CD4-positive, alpha-beta T cell (primary cell): ENCODE measurements at regions of chrX and their contacts with region 1.

Region 1: GRCh38 chrX:48801280-48802088 is at the start of gene HDAC6:
- DNase-seq: peak; percentile 87 to 99 (median 93)
- ATAC-seq: peak; percentile 84
- H3K4me3 ChIP-seq: peak within 1 kb of the TSS; percentile 87
- H3K4me3 Mint-ChIP-seq: peak within 1 kb of the TSS; percentile 93
- H3K27ac ChIP-seq: peak within 1 kb of the TSS; percentile 89 to 97
- H3K27ac Mint-ChIP-seq: peak within 1 kb of the TSS; percentile 99
- H3K4me1 ChIP-seq: peaks cover 17% of the 10 kb centered on the region
- H3K4me1 Mint-ChIP-seq: peaks cover 18% of the 10 kb centered on the region
- H3K27me3 ChIP-seq: no peaks in the 10 kb centered on the region
- H3K27me3 Mint-ChIP-seq: no peaks in the 10 kb centered on the region
- CTCF ChIP-seq: no peak
- total RNA-seq, gene HDAC6: 95.2 to 95.7 TPM

Region 2: GRCh38 chrX:48574270-48575266 is 226.9 kb before region 1 on chrX and contains the start of gene RBM3:
- CTCF ChIA-PET with region 1: no interaction called
- POLR2A ChIA-PET with region 1: interaction called, 18 read pairs
- intact Hi-C with region 1: no loop called
- DNase-seq: peak; percentile 80 to 97 (median 90)
- ATAC-seq: peak; percentile 93
- H3K4me3 ChIP-seq: peak within 1 kb of the TSS; percentile 87
- H3K4me3 Mint-ChIP-seq: peak within 1 kb of the TSS; percentile 98
- H3K27ac ChIP-seq: peak within 1 kb of the TSS; percentile 99 to 100
- H3K27ac Mint-ChIP-seq: peak within 1 kb of the TSS; percentile 98
- H3K4me1 ChIP-seq: peaks cover 26% of the 10 kb centered on the region
- H3K4me1 Mint-ChIP-seq: peaks cover 27% of the 10 kb centered on the region
- H3K27me3 ChIP-seq: no peaks in the 10 kb centered on the region
- H3K27me3 Mint-ChIP-seq: no peaks in the 10 kb centered on the region
- CTCF ChIP-seq: peak; percentile 36
- total RNA-seq, gene RBM3: 351 to 377 TPM

Region 3: GRCh38 chrX:48676106-48676892 is 125.2 kb before region 1 on chrX:
- CTCF ChIA-PET with region 1: no interaction called
- POLR2A ChIA-PET with region 1: interaction called, 12 read pairs
- intact Hi-C with region 1: loop called (anchors 5 to 10 kb)
- DNase-seq: peak; percentile 74 to 94 (median 86)
- ATAC-seq: peak; percentile 96
- H3K4me3 ChIP-seq: peak overlapping the region; percentile 79
- H3K4me3 Mint-ChIP-seq: peak overlapping the region; percentile 95
- H3K27ac ChIP-seq: peak overlapping the region; percentile 64
- H3K27ac Mint-ChIP-seq: peak overlapping the region; percentile 96
- H3K4me1 ChIP-seq: peaks cover 28% of the 10 kb centered on the region
- H3K4me1 Mint-ChIP-seq: peaks cover 18% of the 10 kb centered on the region
- H3K27me3 ChIP-seq: no peaks in the 10 kb centered on the region
- H3K27me3 Mint-ChIP-seq: no peaks in the 10 kb centered on the region
- CTCF ChIP-seq: no peak

Region 4: GRCh38 chrX:48696301-48697181 is 104.9 kb before region 1 on chrX and contains the start of gene SUV39H1:
- CTCF ChIA-PET with region 1: no interaction called
- POLR2A ChIA-PET with region 1: interaction called, 16 read pairs
- intact Hi-C with region 1: loop called (anchors 1 to 5 kb)
- DNase-seq: peak; percentile 66 to 95 (median 80)
- ATAC-seq: peak; percentile 93
- H3K4me3 ChIP-seq: peak within 1 kb of the TSS; percentile 65
- H3K4me3 Mint-ChIP-seq: peak within 1 kb of the TSS; percentile 98
- H3K27ac ChIP-seq: peak within 1 kb of the TSS; percentile 72 to 75
- H3K27ac Mint-ChIP-seq: peak within 1 kb of the TSS; percentile 98
- H3K4me1 ChIP-seq: peaks cover 17% of the 10 kb centered on the region
- H3K4me1 Mint-ChIP-seq: peaks cover 24% of the 10 kb centered on the region
- H3K27me3 ChIP-seq: no peaks in the 10 kb centered on the region
- H3K27me3 Mint-ChIP-seq: no peaks in the 10 kb centered on the region
- CTCF ChIP-seq: no peak
- total RNA-seq, gene SUV39H1: 7.7 to 8.4 TPM

Region 5: DNA sequence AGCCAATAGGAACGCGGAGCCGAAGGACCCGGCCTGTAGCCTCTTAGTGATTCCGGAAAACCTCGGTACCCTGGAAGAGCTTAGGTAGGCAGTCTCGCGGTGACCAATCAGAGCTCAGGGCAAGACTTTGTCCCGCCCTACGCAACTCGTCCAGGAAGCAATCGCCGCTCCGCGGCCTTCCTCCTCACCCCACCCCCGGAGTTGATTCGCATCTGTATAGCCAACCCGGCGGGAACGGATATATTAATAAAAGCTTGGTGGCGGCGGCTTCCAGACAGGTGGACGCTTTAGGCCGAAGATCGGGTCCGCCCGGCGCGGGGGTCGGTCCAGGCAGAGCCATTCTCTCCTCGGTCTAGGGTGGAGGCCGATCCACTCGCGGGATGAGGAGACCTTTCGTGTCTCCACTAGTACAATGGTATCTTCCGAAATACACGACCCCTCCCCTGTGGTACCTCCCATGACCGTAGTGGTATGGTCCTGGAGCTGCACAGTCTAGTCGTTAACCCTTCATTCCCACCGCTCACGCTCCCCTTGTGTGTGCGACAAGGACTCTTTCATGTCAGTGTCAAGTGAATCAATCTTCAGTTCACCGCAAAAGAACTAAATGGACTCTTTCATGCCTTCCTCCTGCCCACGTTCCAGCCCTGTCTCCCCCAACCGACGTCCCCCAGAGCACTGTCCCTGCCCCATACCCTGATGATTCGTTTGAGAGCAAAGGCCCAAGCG is 64.1 kb before region 1 on chrX:
- CTCF ChIA-PET with region 1: no interaction called
- POLR2A ChIA-PET with region 1: interaction called, 40 read pairs
- intact Hi-C with region 1: loop called (anchors 1 to 2 kb)
- DNase-seq: peak; percentile 72 to 97 (median 84)
- ATAC-seq: peak; percentile 94
- H3K4me3 ChIP-seq: peak overlapping the region; percentile 74
- H3K4me3 Mint-ChIP-seq: peak overlapping the region; percentile 92
- H3K27ac ChIP-seq: peak overlapping the region; percentile 76 to 92
- H3K27ac Mint-ChIP-seq: peak overlapping the region; percentile 96
- H3K4me1 ChIP-seq: peaks cover 17% of the 10 kb centered on the region
- H3K4me1 Mint-ChIP-seq: peaks cover 24% of the 10 kb centered on the region
- H3K27me3 ChIP-seq: no peaks in the 10 kb centered on the region
- H3K27me3 Mint-ChIP-seq: no peaks in the 10 kb centered on the region
- CTCF ChIP-seq: no peak

Region 6: GRCh38 chrX:48823053-48823452 is 21.6 kb after region 1 on chrX:
- CTCF ChIA-PET with region 1: no interaction called
- POLR2A ChIA-PET with region 1: no interaction called
- intact Hi-C with region 1: no loop called
- DNase-seq: no peak
- ATAC-seq: no peak
- H3K4me3 ChIP-seq: no peak overlapping the region
- H3K4me3 Mint-ChIP-seq: no peak overlapping the region
- H3K27ac ChIP-seq: no peak overlapping the region
- H3K27ac Mint-ChIP-seq: no peak overlapping the region
- H3K4me1 ChIP-seq: peaks cover 12% of the 10 kb centered on the region
- H3K4me1 Mint-ChIP-seq: no peaks in the 10 kb centered on the region
- H3K27me3 ChIP-seq: peaks cover 16% of the 10 kb centered on the region in 2 experiments
- H3K27me3 Mint-ChIP-seq: peaks cover 7% of the 10 kb centered on the region
- CTCF ChIP-seq: no peak

Region 7: DNA sequence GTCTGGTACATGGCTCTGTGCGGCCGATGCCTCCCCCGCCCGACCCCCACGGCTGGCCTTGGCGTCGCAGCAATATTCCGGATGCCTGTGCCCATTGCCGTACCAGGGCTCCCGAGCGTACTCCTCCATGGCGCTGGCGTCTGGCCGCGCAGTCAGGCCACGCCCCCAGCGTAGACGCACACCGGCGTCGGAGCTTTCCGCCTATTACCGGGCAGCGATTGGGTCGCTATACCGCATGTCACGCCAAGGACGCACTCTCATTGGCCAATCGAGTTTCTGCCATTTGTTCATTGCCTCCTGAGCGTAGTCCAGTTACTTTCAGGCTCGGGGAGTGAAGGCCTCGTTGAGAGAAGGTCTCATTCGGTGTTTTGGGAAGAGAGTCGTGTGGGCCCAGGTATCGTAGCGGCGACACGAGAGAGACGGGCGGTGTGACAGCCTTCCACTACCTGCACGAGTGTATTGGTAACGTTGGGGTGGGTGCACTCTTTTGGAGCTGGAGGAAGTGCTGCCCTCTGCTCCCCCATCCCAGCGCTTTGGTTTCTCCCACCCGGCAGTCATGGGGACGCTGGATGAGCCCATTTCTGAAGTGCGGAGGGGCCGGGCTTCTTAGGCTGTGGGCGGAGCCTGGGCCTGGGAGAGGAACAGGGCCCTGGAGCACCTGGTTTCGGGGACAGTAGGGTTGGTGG is 96.3 kb after region 1 on chrX and contains the starts of genes PQBP1 and TIMM17B:
- CTCF ChIA-PET with region 1: no interaction called
- POLR2A ChIA-PET with region 1: interaction called, 18 read pairs
- intact Hi-C with region 1: loop called in 1 of 2 experiments (anchors 5 kb)
- DNase-seq: peak; percentile 73 to 96 (median 84)
- ATAC-seq: peak; percentile 84
- H3K4me3 ChIP-seq: peak within 1 kb of the TSS; percentile 91
- H3K4me3 Mint-ChIP-seq: peak within 1 kb of the TSS; percentile 91
- H3K27ac ChIP-seq: peak within 1 kb of the TSS; percentile 93 to 98
- H3K27ac Mint-ChIP-seq: peak within 1 kb of the TSS; percentile 90
- H3K4me1 ChIP-seq: peaks cover 33% of the 10 kb centered on the region
- H3K4me1 Mint-ChIP-seq: peaks cover 27% of the 10 kb centered on the region
- H3K27me3 ChIP-seq: no peaks in the 10 kb centered on the region
- H3K27me3 Mint-ChIP-seq: no peaks in the 10 kb centered on the region
- CTCF ChIP-seq: no peak
- total RNA-seq, gene PQBP1: 73.0 to 76.6 TPM
- total RNA-seq, gene TIMM17B: 40.0 to 40.3 TPM

Region 8: DNA sequence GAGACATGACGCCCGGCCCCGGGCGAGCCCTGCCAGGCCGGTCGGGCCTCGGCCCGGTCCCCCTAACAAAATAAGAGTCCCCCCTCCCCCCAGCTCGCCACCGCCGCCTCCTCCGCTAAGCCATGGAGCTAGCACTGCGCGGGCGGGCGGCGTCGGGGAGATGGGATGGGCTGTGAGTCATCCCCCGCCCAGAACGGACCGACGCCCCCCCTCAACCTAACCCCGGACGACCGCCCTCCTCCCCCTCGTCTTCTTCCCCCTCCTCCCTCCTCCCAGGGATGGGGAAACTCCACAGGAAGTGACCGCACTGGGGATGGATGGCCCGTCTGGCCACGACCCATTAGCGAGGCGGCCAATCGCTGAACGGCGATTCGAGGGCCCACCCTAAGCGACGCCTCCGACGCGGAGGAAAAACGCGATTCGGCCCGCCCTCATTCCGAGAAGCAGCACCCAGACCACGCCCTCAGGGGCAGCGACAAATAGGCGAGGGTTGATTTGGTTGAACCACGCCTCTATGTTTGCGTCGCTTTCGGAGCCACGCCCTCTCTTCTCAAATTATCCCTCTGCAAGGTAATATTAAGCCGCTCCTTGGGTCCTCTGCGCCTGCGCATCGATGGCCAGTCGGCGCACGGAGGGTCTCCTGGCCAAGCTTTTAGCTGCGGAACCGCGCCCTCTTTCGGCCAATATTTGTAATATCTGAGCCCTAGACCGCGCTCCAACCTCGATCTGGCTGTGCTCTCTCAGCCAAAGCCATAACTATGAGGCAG is 241.9 kb after region 1 on chrX and contains the start of gene TFE3:
- CTCF ChIA-PET with region 1: no interaction called
- POLR2A ChIA-PET with region 1: no interaction called
- intact Hi-C with region 1: loop called in 1 of 2 experiments (anchors 5 kb)
- DNase-seq: peak; percentile 87 to 99 (median 93)
- ATAC-seq: peak; percentile 86
- H3K4me3 ChIP-seq: peak within 1 kb of the TSS; percentile 66
- H3K4me3 Mint-ChIP-seq: peak within 1 kb of the TSS; percentile 96
- H3K27ac ChIP-seq: peak within 1 kb of the TSS; percentile 84 to 88
- H3K27ac Mint-ChIP-seq: peak within 1 kb of the TSS; percentile 94
- H3K4me1 ChIP-seq: peaks cover 42% of the 10 kb centered on the region
- H3K4me1 Mint-ChIP-seq: peaks cover 39% of the 10 kb centered on the region
- H3K27me3 ChIP-seq: no peaks in the 10 kb centered on the region
- H3K27me3 Mint-ChIP-seq: no peaks in the 10 kb centered on the region
- CTCF ChIP-seq: peak; percentile 41
- total RNA-seq, gene TFE3: 38.6 to 40.9 TPM